ENCODE measurements at regions of chr1 and their contacts with region 1.

Region 1: DNA sequence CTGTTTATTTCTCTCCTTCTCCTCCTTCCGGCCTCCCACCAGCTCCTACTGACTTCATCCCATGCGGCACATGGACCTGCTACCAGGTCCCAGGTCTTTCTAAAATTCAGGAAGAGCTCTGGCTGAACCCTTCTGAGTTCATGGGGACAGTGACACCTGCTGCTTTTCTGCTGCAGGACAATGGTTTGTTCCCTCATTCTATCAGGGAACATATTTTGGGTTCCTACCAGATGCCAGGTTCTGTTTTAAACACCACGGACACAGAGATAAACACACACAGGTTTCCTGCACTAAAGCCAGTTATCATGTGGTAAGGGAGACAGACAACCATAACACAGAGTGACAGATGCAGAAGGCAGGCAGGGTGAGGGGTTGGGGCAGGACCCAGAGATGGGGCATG is 114.0 kb upstream of the RAB4A start:
- DNase-seq: peak; percentile 18
- ATAC-seq: peak; percentile 82
- H3K4me3 ChIP-seq: no peak overlapping the region
- H3K27ac ChIP-seq: no peak overlapping the region
- H3K4me1 ChIP-seq: no peaks in the 10 kb centered on the region
- H3K27me3 ChIP-seq: no peaks in the 10 kb centered on the region
- CTCF ChIP-seq: peak; percentile 46 to 64 (median 59)
- POLR2A ChIP-seq: no peak
- RAD21 ChIP-seq: peak; percentile 88

Region 2: GRCh38 chr1:228664399-228664914 is 492.4 kb before region 1 on chr1:
- CTCF ChIA-PET with region 1: interaction called, 6 read pairs
- POLR2A ChIA-PET with region 1: no interaction called
- RAD21 ChIA-PET with region 1: no interaction called
- intact Hi-C with region 1: loop called (anchors 1 kb)
- DNase-seq: peak; percentile 85
- ATAC-seq: peak; percentile 75
- H3K4me3 ChIP-seq: peak overlapping the region; percentile 37 to 55
- H3K27ac ChIP-seq: peak overlapping the region; percentile 76; the same call in 1 of the 2 replicates
- H3K4me1 ChIP-seq: peaks cover 6 to 17% of the 10 kb centered on the region in 2 experiments; a peak in 3 of 4 replicates
- H3K27me3 ChIP-seq: no peaks in the 10 kb centered on the region
- CTCF ChIP-seq: peak; percentile 70 to 91 (median 79)
- POLR2A ChIP-seq: no peak
- RAD21 ChIP-seq: peak; percentile 98

Region 3: DNA sequence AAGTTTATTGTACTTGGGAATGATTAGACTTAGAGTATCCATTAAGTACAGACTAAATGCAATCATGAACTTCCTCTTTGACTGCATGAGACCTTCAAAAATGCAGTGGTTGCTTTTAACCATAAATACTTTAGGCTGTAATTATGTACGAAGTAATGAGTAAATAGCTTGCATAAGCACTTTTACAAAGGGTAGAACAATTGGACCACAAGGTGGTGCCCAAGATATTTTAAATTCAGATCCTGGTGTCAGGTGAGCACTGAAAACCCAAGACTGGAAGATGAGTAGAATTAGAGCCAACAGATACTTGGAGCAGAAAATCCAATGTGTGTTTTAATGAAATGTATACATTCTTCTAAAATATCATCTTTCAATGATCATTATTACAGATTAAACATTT is 464.9 kb before region 1 on chr1:
- CTCF ChIA-PET with region 1: interaction called, 10 read pairs
- POLR2A ChIA-PET with region 1: no interaction called
- RAD21 ChIA-PET with region 1: no interaction called
- intact Hi-C with region 1: loop called (anchors 1 kb)
- DNase-seq: peak; percentile 67
- ATAC-seq: peak; percentile 82
- H3K4me3 ChIP-seq: no peak overlapping the region
- H3K27ac ChIP-seq: no peak overlapping the region
- H3K4me1 ChIP-seq: peaks cover 4 to 10% of the 10 kb centered on the region in 2 experiments; a peak in 3 of 4 replicates
- H3K27me3 ChIP-seq: peaks cover 6% of the 10 kb centered on the region; the same call in 1 of the 2 replicates
- CTCF ChIP-seq: peak; percentile 39 to 80 (median 65)
- POLR2A ChIP-seq: no peak
- RAD21 ChIP-seq: peak; percentile 90

Region 4: GRCh38 chr1:228734881-228735801 is 421.7 kb before region 1 on chr1 and contains the start of gene RHOU:
- CTCF ChIA-PET with region 1: interaction called, 5 read pairs
- POLR2A ChIA-PET with region 1: no interaction called
- RAD21 ChIA-PET with region 1: no interaction called
- intact Hi-C with region 1: loop called (anchors 2 kb)
- DNase-seq: peak; percentile 12
- ATAC-seq: peak; percentile 90
- H3K4me3 ChIP-seq: peak within 1 kb of the TSS; percentile 53 to 62
- H3K27ac ChIP-seq: peak within 1 kb of the TSS; percentile 45; the same call in 1 of the 2 replicates
- H3K4me1 ChIP-seq: peaks cover 13 to 16% of the 10 kb centered on the region in 2 experiments; a peak in 3 of 4 replicates
- H3K27me3 ChIP-seq: no peaks in the 10 kb centered on the region
- CTCF ChIP-seq: peak in 2 of 3 experiments; percentile 8 to 30; a peak in 2 of 6 replicates
- POLR2A ChIP-seq: no peak
- RAD21 ChIP-seq: peak; percentile 39
- total RNA-seq, gene RHOU: 4.0 TPM

Region 5: DNA sequence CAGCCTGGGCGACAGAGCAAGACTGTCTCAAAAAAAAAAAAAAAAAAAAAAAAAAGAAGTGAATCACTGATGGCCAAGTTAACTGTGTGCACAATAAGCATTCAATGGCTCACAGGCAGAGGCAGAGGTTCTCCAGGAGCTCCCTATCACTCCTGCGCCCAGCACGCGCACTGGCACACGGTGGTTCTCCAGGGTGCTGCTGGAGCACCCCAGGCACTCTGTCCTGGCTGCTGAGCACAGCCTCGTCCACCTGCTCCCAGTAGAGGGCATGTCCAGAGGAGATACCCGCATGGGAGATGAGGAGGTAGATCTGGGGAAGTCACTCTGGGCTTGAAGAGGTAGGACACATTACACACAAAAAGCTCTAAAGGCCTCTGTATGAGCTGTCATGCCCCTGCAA is 372.8 kb after region 1 on chr1:
- CTCF ChIA-PET with region 1: no interaction called
- POLR2A ChIA-PET with region 1: no interaction called
- RAD21 ChIA-PET with region 1: no interaction called
- intact Hi-C with region 1: no loop called
- DNase-seq: no peak
- ATAC-seq: no peak
- H3K4me3 ChIP-seq: no peak overlapping the region
- H3K27ac ChIP-seq: no peak overlapping the region
- H3K4me1 ChIP-seq: no peaks in the 10 kb centered on the region
- H3K27me3 ChIP-seq: no peaks in the 10 kb centered on the region
- CTCF ChIP-seq: no peak
- POLR2A ChIP-seq: no peak
- RAD21 ChIP-seq: no peak